Heart right ventricle (tissue), 16 donors: ENCODE measurements at regions of chr4 and their contacts with region 1.

Region 1: GRCh38 chr4:328729-329128 is 8.9 kb upstream of the ZNF141 start:
- DNase-seq: no peak
- ATAC-seq: no peak
- H3K4me3 ChIP-seq: no peak overlapping the region
- H3K27ac ChIP-seq: no peak overlapping the region
- H3K4me1 ChIP-seq: no peaks in the 10 kb centered on the region
- H3K27me3 ChIP-seq: no peaks in the 10 kb centered on the region
- CTCF ChIP-seq: no peak

Region 2: GRCh38 chr4:114149-114548 is 214.6 kb before region 1 on chr4:
- intact Hi-C with region 1: no loop called
- DNase-seq: no peak
- ATAC-seq: no peak
- H3K4me3 ChIP-seq: no peak overlapping the region
- H3K27ac ChIP-seq: no peak overlapping the region
- H3K4me1 ChIP-seq: no peaks in the 10 kb centered on the region
- H3K27me3 ChIP-seq: peaks cover 0 to 29% (median 18%) of the 10 kb centered on the region in 7 donors
- CTCF ChIP-seq: no peak

Region 3: DNA sequence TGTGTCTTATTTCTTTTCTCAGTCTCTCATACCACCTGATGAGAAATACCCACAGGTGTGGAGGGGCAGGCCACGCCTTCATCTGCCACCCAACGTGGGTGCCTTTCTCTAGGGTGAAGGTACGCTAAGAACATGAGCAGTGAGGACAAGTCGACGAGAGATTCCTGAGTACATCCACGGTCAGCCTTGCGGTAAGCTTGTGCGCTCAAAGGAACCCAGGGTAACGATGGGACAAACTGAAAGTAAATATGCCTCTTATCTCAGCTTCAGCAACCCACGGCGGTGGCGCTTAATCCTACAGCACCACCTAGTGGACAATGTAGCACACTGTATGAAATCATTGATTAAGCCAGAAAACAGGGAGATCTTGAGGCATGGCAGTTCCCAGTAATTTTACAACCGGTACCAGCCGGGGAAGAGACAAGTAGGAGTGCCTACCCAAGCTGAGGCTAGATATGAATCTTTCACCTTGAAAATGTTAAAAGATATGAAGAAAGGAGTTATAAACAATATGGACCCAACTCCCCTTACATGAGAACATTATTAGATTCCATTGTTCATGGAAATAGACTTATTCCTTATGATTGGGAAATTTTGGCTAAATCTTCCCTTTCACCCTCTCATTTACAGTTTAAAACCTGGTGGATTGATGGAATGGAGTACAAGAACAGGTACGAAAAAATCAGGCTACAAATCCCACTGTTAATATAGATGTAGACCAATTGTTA is 86.4 kb before region 1 on chr4:
- intact Hi-C with region 1: loop called in 3 of 10 experiments (anchors 10 kb)
- DNase-seq: peak; percentile 50 to 70
- ATAC-seq: peak; percentile 78 to 99 (median 96)
- H3K4me3 ChIP-seq: peak overlapping the region in 9 of 10 donors; percentile 37 to 65 (median 56)
- H3K27ac ChIP-seq: peak overlapping the region in 7 of 10 donors; percentile 30 to 67 (median 53)
- H3K4me1 ChIP-seq: peaks cover 0 to 17% (median 12%) of the 10 kb centered on the region in 9 donors
- H3K27me3 ChIP-seq: no peaks in the 10 kb centered on the region
- CTCF ChIP-seq: peak; percentile 88 to 96 (median 93)

Region 4: DNA sequence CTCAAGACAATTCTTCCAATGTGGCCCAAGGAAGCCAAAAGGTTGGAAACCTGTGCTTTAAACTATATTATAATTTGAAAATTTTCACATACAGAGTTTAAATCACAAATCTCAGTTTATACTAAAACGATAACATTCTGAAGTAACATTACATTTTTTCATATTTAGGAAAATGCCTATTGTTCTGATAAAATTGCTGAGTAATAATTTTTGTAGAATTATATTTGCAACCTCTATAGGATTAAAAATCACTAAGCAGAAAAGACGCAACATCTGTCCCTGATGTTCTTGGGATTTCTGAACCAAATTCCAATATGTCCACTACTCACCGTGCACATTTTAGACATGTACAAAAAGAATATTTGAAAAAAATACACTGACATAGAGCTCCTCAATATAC is 34.0 kb before region 1 on chr4:
- intact Hi-C with region 1: no loop called
- DNase-seq: no peak
- ATAC-seq: no peak
- H3K4me3 ChIP-seq: no peak overlapping the region
- H3K27ac ChIP-seq: no peak overlapping the region
- H3K4me1 ChIP-seq: no peaks in the 10 kb centered on the region
- H3K27me3 ChIP-seq: no peaks in the 10 kb centered on the region
- CTCF ChIP-seq: no peak

Region 5: DNA sequence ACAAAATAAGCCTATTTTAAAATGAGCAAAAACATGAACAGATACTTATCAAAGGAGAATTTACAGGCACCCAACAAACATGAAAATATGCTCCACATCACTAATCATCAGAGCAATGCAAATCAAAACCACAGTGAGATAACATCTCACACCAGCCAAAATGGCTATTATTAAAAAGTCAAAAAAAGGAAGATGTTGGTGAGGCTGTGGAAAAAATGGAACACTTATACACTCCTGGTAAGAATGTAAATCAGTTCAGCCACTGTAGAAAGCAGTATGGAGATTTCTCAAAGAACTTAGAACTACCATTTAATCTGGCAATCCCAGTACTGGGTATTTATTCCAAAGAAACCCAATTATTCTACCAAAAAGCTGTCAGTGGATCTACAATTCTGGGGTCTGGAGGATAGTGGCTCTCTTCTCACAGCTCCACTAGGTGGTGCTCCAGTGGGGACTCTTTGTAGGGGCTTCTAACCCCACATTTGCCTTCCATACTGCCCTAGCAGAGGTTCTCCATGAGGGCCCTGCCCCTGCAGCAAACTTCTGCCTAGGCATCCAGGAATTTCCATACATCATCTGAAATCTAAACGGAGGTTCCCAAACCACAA is 14.3 kb before region 1 on chr4:
- intact Hi-C with region 1: no loop called
- DNase-seq: no peak
- ATAC-seq: no peak
- H3K4me3 ChIP-seq: no peak overlapping the region
- H3K27ac ChIP-seq: no peak overlapping the region
- H3K4me1 ChIP-seq: no peaks in the 10 kb centered on the region
- H3K27me3 ChIP-seq: no peaks in the 10 kb centered on the region
- CTCF ChIP-seq: no peak